ENCODE measurements at regions of chr10 and their contacts with region 1.

Region 1: GRCh38 chr10:88091490-88092105 is 228.2 kb downstream of the PTEN start:
- DNase-seq: peak; percentile 95
- H3K4me3 ChIP-seq: no peak overlapping the region
- H3K27ac ChIP-seq: peak overlapping the region; percentile 12
- H3K4me1 ChIP-seq: peaks cover 58% of the 10 kb centered on the region
- H3K27me3 ChIP-seq: no peaks in the 10 kb centered on the region
- CTCF ChIP-seq: peak in 1 of 2 donors; percentile 38

Region 2: DNA sequence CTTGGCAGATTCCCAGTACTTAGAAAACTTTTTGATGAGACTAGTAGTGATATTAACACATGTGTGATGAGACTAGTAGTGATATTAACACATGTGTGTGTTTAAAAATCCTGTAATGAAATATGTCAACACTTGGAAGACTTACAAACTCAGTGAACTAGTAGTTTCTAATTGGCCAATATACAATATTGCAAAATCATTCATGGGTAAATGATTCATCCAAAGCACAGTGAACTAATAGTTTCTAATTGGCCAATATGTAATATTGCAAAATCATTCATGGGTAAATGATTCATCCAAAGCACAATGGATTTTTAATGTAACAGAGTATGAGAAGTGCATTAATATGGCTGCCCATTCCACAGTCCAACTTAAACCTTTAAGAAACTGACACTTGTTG is 351.4 kb before region 1 on chr10:
- CTCF ChIA-PET with region 1: no interaction called
- dilution Hi-C with region 1: no loop called
- in situ Hi-C with region 1: no loop called
- intact Hi-C with region 1: no loop called
- DNase-seq: peak; percentile 86
- H3K4me3 ChIP-seq: no peak overlapping the region
- H3K27ac ChIP-seq: no peak overlapping the region
- H3K4me1 ChIP-seq: peaks cover 6% of the 10 kb centered on the region
- H3K27me3 ChIP-seq: no peaks in the 10 kb centered on the region
- CTCF ChIP-seq: no peak

Region 3: DNA sequence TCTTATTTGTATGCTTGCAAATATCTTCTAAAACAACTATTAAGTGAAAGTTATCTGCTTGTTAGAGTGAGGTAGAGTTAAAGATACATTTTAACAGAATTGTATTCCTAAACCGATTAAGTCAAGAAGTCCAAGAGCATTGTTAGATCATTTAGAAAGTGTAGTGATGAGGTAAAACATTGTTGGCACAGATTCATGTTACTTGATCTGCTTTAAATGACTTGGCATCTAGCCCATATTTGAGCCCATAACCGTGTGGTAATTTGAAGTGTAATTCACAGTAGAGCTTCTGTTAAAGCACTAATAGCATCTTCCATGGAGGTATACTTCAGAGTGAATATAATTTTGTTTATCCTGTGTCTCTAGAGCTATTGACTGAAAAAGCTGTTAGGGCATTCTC is 166.0 kb before region 1 on chr10:
- CTCF ChIA-PET with region 1: no interaction called
- dilution Hi-C with region 1: no loop called
- in situ Hi-C with region 1: no loop called
- intact Hi-C with region 1: no loop called
- DNase-seq: peak; percentile 24
- H3K4me3 ChIP-seq: no peak overlapping the region
- H3K27ac ChIP-seq: no peak overlapping the region
- H3K4me1 ChIP-seq: peaks cover 14% of the 10 kb centered on the region
- H3K27me3 ChIP-seq: no peaks in the 10 kb centered on the region
- CTCF ChIP-seq: no peak

Region 4: DNA sequence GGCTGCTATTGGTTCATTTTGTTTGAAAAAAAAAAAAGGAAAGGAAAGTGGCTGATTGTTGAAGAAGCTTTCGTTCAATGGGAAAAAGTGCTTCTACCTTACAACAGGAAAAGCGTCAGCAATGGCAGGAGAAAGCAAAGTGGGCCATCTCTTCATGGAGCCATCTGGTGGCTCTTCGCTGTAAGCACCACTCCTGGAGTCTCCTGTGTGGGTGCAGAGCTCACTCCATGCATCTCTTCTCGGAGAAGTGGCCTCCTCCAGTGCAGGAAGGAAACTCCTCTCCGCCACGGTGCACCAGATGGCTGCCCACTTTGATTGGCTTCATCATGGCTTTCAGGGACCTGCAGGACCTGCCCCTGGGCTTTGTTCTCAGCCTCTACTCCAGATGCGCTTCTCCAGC is 22.8 kb after region 1 on chr10:
- CTCF ChIA-PET with region 1: no interaction called
- dilution Hi-C with region 1: no loop called
- in situ Hi-C with region 1: no loop called
- intact Hi-C with region 1: loop called (anchors 2 kb)
- DNase-seq: no peak
- H3K4me3 ChIP-seq: no peak overlapping the region
- H3K27ac ChIP-seq: no peak overlapping the region
- H3K4me1 ChIP-seq: peaks cover 28% of the 10 kb centered on the region
- H3K27me3 ChIP-seq: no peaks in the 10 kb centered on the region
- CTCF ChIP-seq: peak; percentile 38 to 52

Region 5: GRCh38 chr10:88152720-88153119 is 61.1 kb after region 1 on chr10:
- CTCF ChIA-PET with region 1: no interaction called
- dilution Hi-C with region 1: no loop called
- in situ Hi-C with region 1: no loop called
- intact Hi-C with region 1: loop called (anchors 5 kb)
- DNase-seq: peak; percentile 96
- H3K4me3 ChIP-seq: no peak overlapping the region
- H3K27ac ChIP-seq: peak overlapping the region; percentile 75
- H3K4me1 ChIP-seq: peaks cover 57% of the 10 kb centered on the region
- H3K27me3 ChIP-seq: no peaks in the 10 kb centered on the region
- CTCF ChIP-seq: no peak

Region 6: DNA sequence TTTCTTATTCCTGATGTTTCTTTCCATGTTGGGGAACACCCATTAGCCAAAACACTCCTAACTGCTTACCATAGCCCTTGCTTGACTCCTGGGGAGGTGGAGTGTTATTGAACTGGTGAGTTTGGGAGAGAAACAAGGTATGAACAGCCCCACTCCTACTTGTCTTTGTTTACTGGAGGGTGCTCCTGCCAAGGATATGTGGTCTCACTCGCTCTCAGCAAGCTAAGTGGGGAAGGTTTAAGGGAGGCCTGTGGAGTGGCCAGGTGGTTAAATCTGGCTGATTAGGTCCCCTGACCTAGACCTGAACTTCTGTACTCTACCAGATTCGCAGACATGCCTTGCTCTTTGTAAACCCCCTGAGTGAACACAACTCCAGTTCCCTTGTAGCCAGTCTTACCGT is 72.0 kb after region 1 on chr10:
- CTCF ChIA-PET with region 1: interaction called, 12 read pairs
- dilution Hi-C with region 1: no loop called
- in situ Hi-C with region 1: no loop called
- intact Hi-C with region 1: no loop called
- DNase-seq: no peak
- H3K4me3 ChIP-seq: no peak overlapping the region
- H3K27ac ChIP-seq: no peak overlapping the region
- H3K4me1 ChIP-seq: peaks cover 23% of the 10 kb centered on the region
- H3K27me3 ChIP-seq: no peaks in the 10 kb centered on the region
- CTCF ChIP-seq: no peak